Kidney (tissue), 22 donors: ENCODE measurements at regions of chr17 and their contacts with region 1.

Region 1: GRCh38 chr17:18038861-18039534 is at the starts of genes ATPAF2 and GID4:
- DNase-seq: peak; percentile 99 to 100 (median 100)
- H3K4me3 ChIP-seq: peak within 1 kb of the TSS; percentile 86 to 90 (median 88)
- H3K27ac ChIP-seq: peak within 1 kb of the TSS; percentile 50 to 72
- H3K4me1 ChIP-seq: peaks cover 0 to 20% (median 10%) of the 10 kb centered on the region in 3 donors
- H3K27me3 ChIP-seq: no peaks in the 10 kb centered on the region
- CTCF ChIP-seq: no peak
- total RNA-seq, gene ATPAF2: 27.0 TPM
- total RNA-seq, gene GID4: 8.7 TPM

Region 2: DNA sequence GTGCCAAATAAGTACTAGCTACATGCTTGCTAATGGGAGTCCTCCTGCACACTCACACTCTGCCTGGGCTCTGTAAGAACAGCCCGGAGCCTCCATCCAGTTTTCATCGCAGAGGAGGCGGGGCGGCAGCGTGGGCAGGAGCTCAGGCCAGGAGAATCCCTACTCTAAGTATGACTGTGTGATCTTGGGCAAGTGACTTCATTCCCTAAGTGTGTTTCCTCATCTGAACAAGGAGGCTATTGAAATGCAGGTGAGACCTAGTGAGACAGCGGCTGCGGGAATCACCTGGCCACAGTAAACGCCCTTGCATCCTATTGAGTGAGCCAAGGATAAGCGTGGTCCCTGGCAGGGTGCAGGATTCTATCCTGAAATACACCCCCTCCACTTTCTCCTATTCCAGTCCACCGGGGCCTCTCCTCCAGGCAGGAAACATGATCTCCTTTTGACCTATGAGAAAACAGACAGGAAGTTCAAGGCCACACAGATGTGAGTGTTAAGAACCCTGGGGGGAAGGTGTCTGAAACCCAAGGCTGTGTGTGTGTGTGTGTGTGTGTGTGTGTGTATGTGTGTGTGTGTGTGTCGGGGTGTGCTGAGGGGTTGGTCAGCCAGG is 363.0 kb before region 1 on chr17:
- intact Hi-C with region 1: loop called (anchors 10 kb)
- DNase-seq: peak in 4 of 5 donors; percentile 84 to 88 (median 86)
- H3K4me3 ChIP-seq: no peak overlapping the region
- H3K27ac ChIP-seq: no peak overlapping the region
- H3K4me1 ChIP-seq: peaks cover 0 to 4% (median 0%) of the 10 kb centered on the region in 3 donors
- H3K27me3 ChIP-seq: no peaks in the 10 kb centered on the region
- CTCF ChIP-seq: no peak

Region 3: GRCh38 chr17:17890773-17891759 is 147.9 kb before region 1 on chr17:
- intact Hi-C with region 1: loop called (anchors 10 kb)
- DNase-seq: peak; percentile 47 to 67 (median 56)
- H3K4me3 ChIP-seq: no peak overlapping the region
- H3K27ac ChIP-seq: no peak overlapping the region
- H3K4me1 ChIP-seq: no peaks in the 10 kb centered on the region
- H3K27me3 ChIP-seq: no peaks in the 10 kb centered on the region
- CTCF ChIP-seq: peak; percentile 67

Region 4: DNA sequence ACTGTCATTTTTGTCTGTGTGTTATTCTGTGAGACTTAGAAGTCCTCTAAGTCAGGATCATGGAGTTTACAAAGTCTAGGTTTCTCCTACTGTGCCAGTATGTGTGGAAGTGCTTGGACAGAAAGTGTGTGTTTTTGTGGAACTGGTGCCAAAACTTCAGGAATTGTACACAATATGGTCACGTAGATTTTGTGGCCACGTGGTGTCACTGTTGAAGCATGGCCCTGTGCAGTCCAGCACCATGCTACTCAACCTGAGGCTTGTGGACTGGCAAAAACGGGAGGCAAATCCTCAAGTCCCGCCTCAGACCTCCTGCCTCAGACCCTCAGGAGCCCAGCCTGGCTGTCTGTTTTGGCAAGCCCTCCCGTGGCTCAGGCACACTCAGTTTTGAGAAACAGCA is 127.9 kb after region 1 on chr17:
- intact Hi-C with region 1: no loop called
- DNase-seq: no peak
- H3K4me3 ChIP-seq: no peak overlapping the region
- H3K27ac ChIP-seq: no peak overlapping the region
- H3K4me1 ChIP-seq: no peaks in the 10 kb centered on the region
- H3K27me3 ChIP-seq: no peaks in the 10 kb centered on the region
- CTCF ChIP-seq: no peak

Region 5: GRCh38 chr17:18183334-18184142 is 144.5 kb after region 1 on chr17 and contains the start of gene ALKBH5:
- intact Hi-C with region 1: no loop called
- DNase-seq: peak; percentile 99 to 100 (median 99)
- H3K4me3 ChIP-seq: peak within 1 kb of the TSS; percentile 75 to 84 (median 76)
- H3K27ac ChIP-seq: peak within 1 kb of the TSS; percentile 97 to 99
- H3K4me1 ChIP-seq: peaks cover 0 to 32% (median 19%) of the 10 kb centered on the region in 3 donors
- H3K27me3 ChIP-seq: no peaks in the 10 kb centered on the region
- CTCF ChIP-seq: peak; percentile 9
- total RNA-seq, gene ALKBH5: 94.4 TPM